ENCODE measurements at regions of chr12 and their contacts with region 1.

Region 1: GRCh38 chr12:26884765-26885576 is 52.0 kb upstream of the ITPR2 start:
- DNase-seq: peak; percentile 47 to 92
- H3K4me3 ChIP-seq: no peak overlapping the region
- H3K27ac ChIP-seq: no peak overlapping the region
- H3K4me1 ChIP-seq: no peaks in the 10 kb centered on the region
- H3K27me3 ChIP-seq: no peaks in the 10 kb centered on the region
- CTCF ChIP-seq: peak; percentile 66 to 93 (median 87)
- EP300 ChIP-seq: no peak
- POLR2A ChIP-seq: no peak
- RAD21 ChIP-seq: peak; percentile 85 to 86

Region 2: GRCh38 chr12:26172539-26172938 is 712.4 kb before region 1 on chr12:
- CTCF ChIA-PET with region 1: no interaction called
- POLR2A ChIA-PET with region 1: no interaction called
- DNase-seq: no peak
- H3K4me3 ChIP-seq: no peak overlapping the region
- H3K27ac ChIP-seq: no peak overlapping the region
- H3K4me1 ChIP-seq: no peaks in the 10 kb centered on the region
- H3K27me3 ChIP-seq: no peaks in the 10 kb centered on the region
- CTCF ChIP-seq: no peak
- EP300 ChIP-seq: no peak
- POLR2A ChIP-seq: no peak
- RAD21 ChIP-seq: no peak

Region 3: GRCh38 chr12:26832822-26833742 is 51.9 kb before region 1 on chr12 and contains the start of gene ITPR2:
- CTCF ChIA-PET with region 1: interaction called, 16 read pairs
- POLR2A ChIA-PET with region 1: no interaction called
- DNase-seq: peak; percentile 73 to 94
- H3K4me3 ChIP-seq: peak within 1 kb of the TSS; percentile 75 to 84 (median 78)
- H3K27ac ChIP-seq: no peak within 1 kb of the TSS
- H3K4me1 ChIP-seq: peaks cover 0 to 4% (median 2%) of the 10 kb centered on the region in 4 experiments; a peak in 4 of 7 replicates
- H3K27me3 ChIP-seq: peaks cover 0 to 6% (median 1%) of the 10 kb centered on the region in 4 experiments; a peak in 1 of 7 replicates
- CTCF ChIP-seq: peak in 2 of 3 experiments; percentile 6 to 40; a peak in 1 of 4 replicates
- EP300 ChIP-seq: no peak
- POLR2A ChIP-seq: peak in 1 of 2 experiments; percentile 53; a peak in 1 of 3 replicates
- RAD21 ChIP-seq: peak in 1 of 2 experiments; percentile 7; a peak in 1 of 4 replicates
- total RNA-seq, gene ITPR2: 48.3 and 48.4 TPM in 2 replicates

Region 4: GRCh38 chr12:26863502-26863901 is 21.5 kb before region 1 on chr12:
- CTCF ChIA-PET with region 1: interaction called, 96 read pairs
- POLR2A ChIA-PET with region 1: no interaction called
- DNase-seq: no peak
- H3K4me3 ChIP-seq: no peak overlapping the region
- H3K27ac ChIP-seq: no peak overlapping the region
- H3K4me1 ChIP-seq: no peaks in the 10 kb centered on the region
- H3K27me3 ChIP-seq: no peaks in the 10 kb centered on the region
- CTCF ChIP-seq: peak in 2 of 3 experiments; percentile 29 to 56; a peak in 2 of 4 replicates
- EP300 ChIP-seq: no peak
- POLR2A ChIP-seq: no peak
- RAD21 ChIP-seq: no peak

Region 5: GRCh38 chr12:26870491-26871419 is 14.2 kb before region 1 on chr12:
- CTCF ChIA-PET with region 1: interaction called, 96 read pairs
- POLR2A ChIA-PET with region 1: no interaction called
- DNase-seq: no peak
- H3K4me3 ChIP-seq: no peak overlapping the region
- H3K27ac ChIP-seq: no peak overlapping the region
- H3K4me1 ChIP-seq: no peaks in the 10 kb centered on the region
- H3K27me3 ChIP-seq: 0 out of 7 replicates have a peak, but pooled peaks cover 0 to 2% (median 0%) of the 10 kb centered on the region in 4 experiments
- CTCF ChIP-seq: no peak
- EP300 ChIP-seq: no peak
- POLR2A ChIP-seq: no peak
- RAD21 ChIP-seq: no peak

Region 6: DNA sequence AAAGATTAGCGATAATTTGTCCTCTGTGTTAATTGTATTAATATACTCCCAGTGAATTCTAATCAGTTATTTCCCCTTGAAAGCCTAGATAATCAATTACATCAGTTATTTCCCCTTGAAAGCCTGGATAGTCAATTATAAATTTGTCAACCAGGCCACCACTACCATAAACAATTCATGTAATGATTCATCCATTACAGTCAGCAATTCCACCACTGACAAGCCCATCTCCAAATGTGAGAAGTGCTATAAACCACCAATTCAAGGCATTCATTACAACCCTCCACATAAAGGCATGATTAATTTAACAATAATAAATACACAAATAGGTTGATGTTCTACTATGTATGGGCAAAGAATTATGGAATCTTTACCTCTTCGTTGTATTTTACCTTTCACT is 11.9 kb after region 1 on chr12:
- CTCF ChIA-PET with region 1: interaction called, 14 read pairs
- POLR2A ChIA-PET with region 1: interaction called, 4 read pairs
- DNase-seq: no peak
- H3K4me3 ChIP-seq: no peak overlapping the region
- H3K27ac ChIP-seq: no peak overlapping the region
- H3K4me1 ChIP-seq: no peaks in the 10 kb centered on the region
- H3K27me3 ChIP-seq: no peaks in the 10 kb centered on the region
- CTCF ChIP-seq: no peak
- EP300 ChIP-seq: no peak
- POLR2A ChIP-seq: no peak
- RAD21 ChIP-seq: no peak